A549 (cell line): ENCODE measurements at regions of chr9 and their contacts with region 1.

Region 1: DNA sequence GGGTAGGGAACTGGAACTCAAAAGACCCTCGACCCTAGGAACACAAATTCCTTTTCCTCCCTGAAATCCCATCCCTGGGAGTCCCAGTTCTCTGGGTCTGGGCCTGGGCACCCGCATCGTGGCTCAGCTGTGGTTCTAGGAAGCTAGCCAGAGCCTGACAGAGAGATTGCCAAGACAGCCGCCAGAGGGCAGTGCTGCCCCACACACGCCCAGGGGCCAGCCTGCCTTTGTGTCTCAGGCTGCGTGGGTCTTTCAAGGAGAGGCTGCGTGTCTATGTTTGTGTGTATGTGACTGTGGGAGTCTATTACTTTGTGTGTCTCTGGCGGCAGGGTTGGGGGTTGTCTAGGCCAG is 32.0 kb upstream of the TTLL11 start:
- DNase-seq: peak; percentile 71 to 87
- ATAC-seq: peak; percentile 83 to 91
- H3K4me3 ChIP-seq: no peak overlapping the region
- H3K27ac ChIP-seq: peak overlapping the region; percentile 7 to 38; a peak in 2 of 6 replicates
- H3K4me1 ChIP-seq: peaks cover 10% of the 10 kb centered on the region; the same call in 2 of the 3 replicates
- CTCF ChIP-seq: peak; percentile 95
- EP300 ChIP-seq: no peak
- POLR2A ChIP-seq: no peak
- RAD21 ChIP-seq: peak; percentile 97 to 98

Region 2: GRCh38 chr9:122107291-122107805 is 17.8 kb before region 1 on chr9:
- CTCF ChIA-PET with region 1: interaction called, 138 read pairs
- POLR2A ChIA-PET with region 1: no interaction called
- DNase-seq: no peak
- ATAC-seq: peak in 1 of 2 experiments; percentile 23; a peak in 3 of 6 replicates
- H3K4me3 ChIP-seq: no peak overlapping the region
- H3K27ac ChIP-seq: no peak overlapping the region
- H3K4me1 ChIP-seq: no peaks in the 10 kb centered on the region
- CTCF ChIP-seq: no peak
- EP300 ChIP-seq: no peak
- POLR2A ChIP-seq: no peak
- RAD21 ChIP-seq: no peak

Region 3: GRCh38 chr9:122151267-122151828 is 26.2 kb after region 1 on chr9:
- CTCF ChIA-PET with region 1: interaction called, 97 read pairs
- POLR2A ChIA-PET with region 1: no interaction called
- DNase-seq: no peak
- ATAC-seq: peak in 1 of 2 experiments; percentile 37; a peak in 1 of 6 replicates
- H3K4me3 ChIP-seq: no peak overlapping the region
- H3K27ac ChIP-seq: no peak overlapping the region
- H3K4me1 ChIP-seq: no peaks in the 10 kb centered on the region
- CTCF ChIP-seq: no peak
- EP300 ChIP-seq: no peak
- POLR2A ChIP-seq: no peak
- RAD21 ChIP-seq: no peak

Region 4: DNA sequence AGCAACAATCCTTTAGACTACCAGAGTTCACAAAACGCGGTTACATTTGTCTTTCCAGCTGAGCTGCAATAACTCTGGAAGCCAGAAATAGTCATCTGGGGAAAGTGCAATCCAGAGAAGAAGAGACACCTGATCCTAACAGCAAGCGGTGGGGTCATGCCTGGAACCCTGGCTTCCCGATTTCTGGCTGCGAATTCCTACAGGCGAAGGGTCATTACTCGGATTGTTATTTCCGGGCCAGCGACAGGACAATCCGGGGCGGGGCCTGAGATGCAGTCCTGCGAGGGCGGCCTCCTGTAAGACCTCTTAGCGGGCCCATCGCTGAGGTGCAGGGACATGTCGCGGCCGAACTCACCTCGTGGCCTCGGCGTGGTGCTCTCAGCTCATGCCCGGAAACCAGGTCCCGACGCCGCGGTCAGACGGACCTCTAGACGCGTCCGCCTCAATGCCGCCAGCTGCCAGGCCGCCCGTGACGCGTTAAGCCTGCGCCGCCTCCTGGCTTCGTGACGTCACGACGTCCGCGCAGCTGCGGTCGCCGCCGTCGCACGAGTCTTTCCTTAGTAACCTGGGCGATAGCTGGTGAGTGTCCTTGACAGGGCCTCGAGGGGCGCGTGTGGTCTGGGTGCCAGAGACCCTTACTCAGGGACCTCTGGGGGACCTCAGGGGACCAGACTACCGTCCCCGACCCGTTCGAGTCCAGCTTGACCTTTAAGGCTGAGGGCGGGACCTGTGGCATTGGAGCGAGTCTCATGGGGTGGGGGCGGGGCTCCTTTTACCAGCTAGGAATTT is 139.4 kb after region 1 on chr9 and contains the starts of genes MRRF and RBM18:
- CTCF ChIA-PET with region 1: interaction called, 28 read pairs
- POLR2A ChIA-PET with region 1: interaction called, 8 read pairs
- DNase-seq: peak; percentile 82 to 95
- ATAC-seq: peak; percentile 89 to 92
- H3K4me3 ChIP-seq: peak within 1 kb of the TSS; percentile 62
- H3K27ac ChIP-seq: peak within 1 kb of the TSS; percentile 86 to 98
- H3K4me1 ChIP-seq: peaks cover 20% of the 10 kb centered on the region
- CTCF ChIP-seq: no peak
- EP300 ChIP-seq: no peak
- POLR2A ChIP-seq: peak; percentile 73
- RAD21 ChIP-seq: no peak
- polyA plus RNA-seq, gene MRRF: 107 and 115 TPM in 2 replicates
- polyA plus RNA-seq, gene RBM18: 41.1 and 52.3 TPM in 2 replicates

Region 5: DNA sequence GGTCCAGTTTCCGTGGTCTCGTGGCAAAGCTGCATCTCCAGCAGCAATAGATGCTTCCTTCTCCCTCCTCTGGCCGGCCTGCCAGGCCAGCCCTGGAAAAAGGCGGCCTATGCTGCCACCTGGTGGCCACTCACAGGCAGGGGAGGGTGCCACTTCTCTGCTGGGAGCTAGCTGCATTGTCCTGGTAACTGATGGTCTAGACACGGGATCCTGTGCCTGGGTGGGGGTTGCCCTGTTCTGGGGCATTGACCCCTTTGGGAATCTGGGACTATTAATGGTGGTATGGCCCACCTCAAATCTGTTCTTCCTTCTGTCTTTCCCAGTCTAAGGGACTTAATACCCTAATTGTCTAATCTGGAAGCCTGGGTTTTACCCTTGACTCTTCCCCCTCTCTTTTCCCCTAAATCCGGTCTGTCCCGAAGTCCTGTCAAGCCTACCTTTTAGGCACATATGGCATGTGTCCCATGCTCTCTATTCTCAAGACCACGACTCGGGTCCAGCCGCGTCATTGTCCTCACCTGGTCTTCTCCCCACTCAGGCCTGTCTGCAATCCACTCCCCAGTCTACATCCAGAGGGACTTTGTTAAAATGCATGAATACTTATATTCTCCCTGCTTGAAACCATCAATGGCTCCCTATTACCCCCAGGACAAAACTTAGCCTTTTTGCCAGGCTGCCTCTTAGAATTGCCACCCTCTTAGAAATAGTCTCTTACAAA is 225.7 kb after region 1 on chr9:
- CTCF ChIA-PET with region 1: interaction called, 541 read pairs
- POLR2A ChIA-PET with region 1: interaction called, 3 read pairs
- DNase-seq: peak; percentile 75 to 84
- ATAC-seq: peak; percentile 94 to 97
- H3K4me3 ChIP-seq: no peak overlapping the region
- H3K27ac ChIP-seq: no peak overlapping the region
- H3K4me1 ChIP-seq: peaks cover 4% of the 10 kb centered on the region; the same call in 2 of the 3 replicates
- CTCF ChIP-seq: peak; percentile 93
- EP300 ChIP-seq: no peak
- POLR2A ChIP-seq: no peak
- RAD21 ChIP-seq: peak; percentile 98